ENCODE measurements at regions of chrX and their contacts with region 1.

Region 1: DNA sequence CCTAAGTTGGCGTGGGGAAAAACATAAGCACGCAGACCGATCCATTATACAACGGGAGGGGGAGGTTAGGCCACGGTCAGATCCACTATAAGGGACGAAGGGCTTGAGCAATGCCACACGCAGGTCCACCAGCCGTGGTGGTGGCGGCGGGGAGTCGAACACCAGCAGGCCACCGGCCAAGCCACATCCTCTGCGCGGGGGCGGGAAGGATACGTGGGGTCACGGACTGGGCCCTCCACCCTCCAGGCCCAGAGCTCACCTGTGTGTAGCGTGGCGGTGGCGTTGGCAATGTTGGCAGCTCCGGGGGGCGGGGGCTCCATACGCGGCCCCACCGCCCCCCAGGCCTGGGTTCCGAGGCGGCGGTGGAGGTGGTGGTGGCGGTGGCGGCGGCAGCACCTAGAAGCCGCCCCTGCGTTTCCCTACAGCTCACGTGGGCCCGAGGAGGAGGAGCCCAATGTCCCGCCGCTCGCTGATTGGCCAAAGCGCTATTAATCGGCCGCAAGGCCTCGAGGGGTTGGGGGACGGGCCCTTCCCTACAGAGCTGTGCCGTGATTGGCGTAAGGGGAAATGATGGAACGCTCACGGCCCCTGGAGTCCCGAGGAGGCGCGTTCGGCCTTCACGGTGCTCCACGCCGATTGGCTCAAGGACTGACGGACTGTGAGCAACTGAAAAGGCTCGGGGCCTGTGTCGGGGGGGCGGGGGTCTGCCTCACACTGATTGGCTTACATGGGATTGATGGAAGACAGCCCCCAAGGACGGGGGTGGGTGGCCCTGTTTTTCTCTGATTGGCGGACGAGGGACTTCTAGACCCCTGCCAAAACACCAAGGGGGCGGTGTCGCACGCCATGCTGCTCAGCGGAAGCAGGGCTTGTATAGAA is at the start of gene ELK1:
- DNase-seq: peak; percentile 76
- ATAC-seq: peak; percentile 92
- H3K4me3 Mint-ChIP-seq: peak within 1 kb of the TSS; percentile 88
- H3K27ac Mint-ChIP-seq: peak within 1 kb of the TSS; percentile 87
- H3K4me1 Mint-ChIP-seq: peaks cover 29% of the 10 kb centered on the region
- H3K27me3 Mint-ChIP-seq: no peaks in the 10 kb centered on the region
- CTCF ChIP-seq: no peak
- total RNA-seq, gene ELK1: 26.5 and 31.8 TPM in 2 replicates

Region 2: GRCh38 chrX:47217642-47218279 is 432.6 kb before region 1 on chrX:
- CTCF ChIA-PET with region 1: no interaction called
- POLR2A ChIA-PET with region 1: no interaction called
- intact Hi-C with region 1: loop called (anchors 5 kb)
- DNase-seq: peak; percentile 84
- ATAC-seq: peak; percentile 80
- H3K4me3 Mint-ChIP-seq: peak overlapping the region; percentile 92
- H3K27ac Mint-ChIP-seq: peak overlapping the region; percentile 99
- H3K4me1 Mint-ChIP-seq: peaks cover 40% of the 10 kb centered on the region
- H3K27me3 Mint-ChIP-seq: no peaks in the 10 kb centered on the region
- CTCF ChIP-seq: no peak

Region 3: DNA sequence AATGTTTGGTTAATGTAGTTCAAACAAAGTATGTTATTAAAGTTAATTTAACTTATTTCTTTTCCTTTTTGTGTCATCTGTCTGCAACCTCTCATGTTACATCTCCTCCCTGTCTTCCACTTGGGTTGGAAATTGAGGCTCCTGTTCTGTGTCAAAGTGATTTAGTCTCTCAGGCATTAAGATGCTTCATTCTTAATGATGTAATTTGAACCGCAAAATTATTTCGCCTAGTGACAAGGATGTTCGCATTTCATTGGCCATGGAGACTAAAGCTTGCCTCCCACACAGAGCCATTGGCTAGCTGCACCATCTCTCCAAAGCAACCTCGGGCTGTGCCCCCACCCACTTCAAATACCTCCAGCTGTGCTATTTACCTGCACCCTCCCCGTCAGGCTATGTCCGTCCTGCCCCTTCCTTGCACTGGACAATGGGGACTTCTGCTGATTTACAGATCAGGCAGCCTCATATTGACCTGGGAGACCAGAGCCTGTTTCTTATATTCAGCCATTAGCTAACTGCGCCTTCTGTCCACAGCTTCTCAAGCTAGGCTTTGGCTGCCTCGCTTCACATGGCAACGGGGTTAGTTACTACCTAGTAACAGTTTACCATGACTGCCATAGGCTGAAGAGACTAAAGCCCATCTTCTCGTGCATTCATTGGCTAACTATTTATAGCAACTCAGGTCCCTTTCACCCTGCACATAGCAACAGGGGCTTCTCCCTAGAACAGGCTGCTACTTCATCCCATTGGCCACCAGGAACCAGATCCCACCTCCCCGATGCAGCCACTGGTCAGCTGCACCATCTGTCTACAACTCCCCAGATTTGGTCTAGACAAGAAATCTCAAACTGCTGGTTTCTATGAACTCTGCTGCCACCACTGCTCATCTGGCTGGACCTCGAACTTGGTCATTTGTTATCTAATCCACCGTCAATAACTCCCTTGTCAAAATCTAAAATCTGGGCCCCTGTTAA is 288.6 kb before region 1 on chrX:
- CTCF ChIA-PET with region 1: no interaction called
- POLR2A ChIA-PET with region 1: no interaction called
- intact Hi-C with region 1: loop called (anchors 10 kb)
- DNase-seq: peak; percentile 51
- ATAC-seq: peak; percentile 79
- H3K4me3 Mint-ChIP-seq: peak overlapping the region; percentile 87
- H3K27ac Mint-ChIP-seq: peak overlapping the region; percentile 97
- H3K4me1 Mint-ChIP-seq: peaks cover 31% of the 10 kb centered on the region
- H3K27me3 Mint-ChIP-seq: no peaks in the 10 kb centered on the region
- CTCF ChIP-seq: no peak

Region 4: GRCh38 chrX:47514562-47515235 is 135.7 kb before region 1 on chrX:
- CTCF ChIA-PET with region 1: no interaction called
- POLR2A ChIA-PET with region 1: no interaction called
- intact Hi-C with region 1: no loop called
- DNase-seq: no peak
- ATAC-seq: no peak
- H3K4me3 Mint-ChIP-seq: no peak overlapping the region
- H3K27ac Mint-ChIP-seq: peak overlapping the region; percentile 27
- H3K4me1 Mint-ChIP-seq: peaks cover 17% of the 10 kb centered on the region
- H3K27me3 Mint-ChIP-seq: no peaks in the 10 kb centered on the region
- CTCF ChIP-seq: no peak

Region 5: DNA sequence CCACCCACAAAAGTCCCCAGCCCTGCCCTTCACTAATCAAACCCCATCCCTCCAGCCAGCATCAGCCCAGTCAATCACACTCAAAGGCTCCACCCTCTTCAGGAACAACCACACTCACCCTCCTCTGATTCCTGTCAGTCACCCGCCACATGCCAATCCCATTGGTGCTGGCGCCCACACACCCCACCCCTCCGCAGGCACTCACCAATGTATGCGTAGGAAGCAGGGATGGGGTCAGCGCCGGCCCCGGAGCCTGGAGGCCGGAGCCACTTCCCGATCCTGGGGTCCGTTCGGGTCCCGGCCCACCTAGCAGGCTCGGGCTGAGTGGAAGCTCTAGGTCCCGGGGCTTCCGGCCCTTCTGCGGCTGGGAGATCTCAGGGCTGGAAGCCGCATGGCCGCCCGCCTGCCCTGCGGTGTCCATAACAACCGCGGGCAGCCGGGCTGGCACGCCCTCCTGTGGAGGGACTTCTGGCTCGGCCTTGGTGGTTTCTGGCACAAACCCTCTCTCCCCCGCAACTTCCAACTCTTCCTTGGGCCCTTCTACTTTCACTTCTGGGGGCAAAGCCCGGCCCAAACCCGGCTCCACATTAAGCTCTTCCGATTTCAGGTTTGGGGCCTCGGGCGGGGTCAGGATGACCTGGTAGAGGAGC is 12.7 kb before region 1 on chrX:
- CTCF ChIA-PET with region 1: no interaction called
- POLR2A ChIA-PET with region 1: no interaction called
- intact Hi-C with region 1: loop called (anchors 2 kb)
- DNase-seq: no peak
- ATAC-seq: peak; percentile 96
- H3K4me3 Mint-ChIP-seq: peak overlapping the region; percentile 63
- H3K27ac Mint-ChIP-seq: peak overlapping the region; percentile 79
- H3K4me1 Mint-ChIP-seq: peaks cover 12% of the 10 kb centered on the region
- H3K27me3 Mint-ChIP-seq: no peaks in the 10 kb centered on the region
- CTCF ChIP-seq: no peak

Region 6: GRCh38 chrX:48475774-48476577 is 825.6 kb after region 1 on chrX and contains the start of gene FTSJ1:
- CTCF ChIA-PET with region 1: no interaction called
- POLR2A ChIA-PET with region 1: no interaction called
- intact Hi-C with region 1: loop called (anchors 5 kb)
- DNase-seq: peak; percentile 70
- ATAC-seq: peak; percentile 87
- H3K4me3 Mint-ChIP-seq: peak within 1 kb of the TSS; percentile 89
- H3K27ac Mint-ChIP-seq: peak within 1 kb of the TSS; percentile 93
- H3K4me1 Mint-ChIP-seq: peaks cover 23% of the 10 kb centered on the region
- H3K27me3 Mint-ChIP-seq: no peaks in the 10 kb centered on the region
- CTCF ChIP-seq: no peak
- total RNA-seq, gene FTSJ1: 39.9 and 44.5 TPM in 2 replicates